ENCODE measurements at regions of chr17 and their contacts with region 1.

Region 1: GRCh38 chr17:1908699-1909309 is 79.0 kb downstream of the RPA1 start:
- DNase-seq: peak in 7 of 10 donors; percentile 50 to 78 (median 64)
- H3K4me3 ChIP-seq: peak overlapping the region in 57 of 59 donors; percentile 2 to 65 (median 45)
- H3K27ac ChIP-seq: peak overlapping the region in 51 of 59 donors; percentile 17 to 93 (median 75)
- H3K27me3 ChIP-seq: peaks cover 0 to 66% (median 3%) of the 10 kb centered on the region in 45 donors
- CTCF ChIP-seq: peak; percentile 14 to 83 (median 71)

Region 2: GRCh38 chr17:2029911-2030778 is 121.3 kb after region 1 on chr17 and contains the start of gene DPH1:
- intact Hi-C with region 1: loop called (anchors 2 kb)
- DNase-seq: peak; percentile 72 to 94 (median 90)
- H3K4me3 ChIP-seq: peak within 1 kb of the TSS; percentile 63 to 100 (median 95)
- H3K27ac ChIP-seq: peak within 1 kb of the TSS in 57 of 59 donors; percentile 20 to 93 (median 79)
- H3K27me3 ChIP-seq: peaks cover 0 to 21% (median 0%) of the 10 kb centered on the region in 45 donors
- CTCF ChIP-seq: peak in 23 of 56 donors; percentile 4 to 49 (median 24)
- total RNA-seq, gene DPH1: 57.6 to 158 (median 87.2) TPM

Region 3: DNA sequence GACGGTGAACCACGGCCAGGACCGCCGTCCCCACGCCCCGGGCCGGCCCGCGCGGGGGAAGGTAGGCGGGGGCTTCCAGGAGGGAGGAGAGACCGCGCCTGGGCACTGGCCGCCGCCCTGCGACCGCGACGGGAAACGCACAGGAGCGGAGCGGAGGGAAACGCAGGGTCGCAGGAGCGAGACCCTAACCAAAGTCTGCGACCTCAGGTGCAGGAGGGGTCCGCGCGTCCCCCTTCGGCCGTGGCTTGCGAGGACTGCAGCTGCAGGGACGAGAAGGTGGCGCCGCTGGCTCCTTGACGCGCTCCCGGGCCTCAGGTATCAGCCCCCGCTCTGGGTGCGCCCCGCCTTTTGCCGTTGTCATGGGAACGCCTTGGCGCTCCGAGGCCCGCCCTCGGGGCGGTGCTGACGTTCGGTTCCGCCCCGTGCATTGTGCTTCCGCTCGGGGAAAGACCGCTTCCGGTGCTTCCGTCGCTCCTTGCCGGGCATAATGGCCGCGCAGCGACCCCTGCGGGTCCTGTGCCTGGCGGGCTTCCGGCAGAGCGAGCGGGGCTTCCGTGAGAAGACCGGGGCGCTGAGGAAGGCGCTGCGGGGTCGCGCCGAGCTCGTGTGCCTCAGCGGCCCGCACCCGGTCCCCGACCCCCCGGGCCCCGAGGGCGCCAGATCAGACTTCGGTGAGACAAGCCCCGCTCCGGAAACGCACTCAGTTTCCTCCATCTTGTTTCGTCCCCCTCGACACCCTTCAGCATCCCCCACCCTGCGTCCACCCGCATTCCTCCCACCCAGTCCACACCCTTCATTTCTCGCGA is 133.0 kb after region 1 on chr17 and contains the start of gene OVCA2:
- intact Hi-C with region 1: loop called in 1 of 2 experiments (anchors 5 kb)
- DNase-seq: peak; percentile 88 to 97 (median 94)
- H3K4me3 ChIP-seq: peak within 1 kb of the TSS; percentile 56 to 92 (median 82)
- H3K27ac ChIP-seq: peak within 1 kb of the TSS; percentile 43 to 96 (median 89)
- H3K27me3 ChIP-seq: no peaks in the 10 kb centered on the region
- CTCF ChIP-seq: peak; percentile 43 to 88 (median 73)
- total RNA-seq, gene OVCA2: 6.6 to 29.4 (median 16.4) TPM

Region 4: DNA sequence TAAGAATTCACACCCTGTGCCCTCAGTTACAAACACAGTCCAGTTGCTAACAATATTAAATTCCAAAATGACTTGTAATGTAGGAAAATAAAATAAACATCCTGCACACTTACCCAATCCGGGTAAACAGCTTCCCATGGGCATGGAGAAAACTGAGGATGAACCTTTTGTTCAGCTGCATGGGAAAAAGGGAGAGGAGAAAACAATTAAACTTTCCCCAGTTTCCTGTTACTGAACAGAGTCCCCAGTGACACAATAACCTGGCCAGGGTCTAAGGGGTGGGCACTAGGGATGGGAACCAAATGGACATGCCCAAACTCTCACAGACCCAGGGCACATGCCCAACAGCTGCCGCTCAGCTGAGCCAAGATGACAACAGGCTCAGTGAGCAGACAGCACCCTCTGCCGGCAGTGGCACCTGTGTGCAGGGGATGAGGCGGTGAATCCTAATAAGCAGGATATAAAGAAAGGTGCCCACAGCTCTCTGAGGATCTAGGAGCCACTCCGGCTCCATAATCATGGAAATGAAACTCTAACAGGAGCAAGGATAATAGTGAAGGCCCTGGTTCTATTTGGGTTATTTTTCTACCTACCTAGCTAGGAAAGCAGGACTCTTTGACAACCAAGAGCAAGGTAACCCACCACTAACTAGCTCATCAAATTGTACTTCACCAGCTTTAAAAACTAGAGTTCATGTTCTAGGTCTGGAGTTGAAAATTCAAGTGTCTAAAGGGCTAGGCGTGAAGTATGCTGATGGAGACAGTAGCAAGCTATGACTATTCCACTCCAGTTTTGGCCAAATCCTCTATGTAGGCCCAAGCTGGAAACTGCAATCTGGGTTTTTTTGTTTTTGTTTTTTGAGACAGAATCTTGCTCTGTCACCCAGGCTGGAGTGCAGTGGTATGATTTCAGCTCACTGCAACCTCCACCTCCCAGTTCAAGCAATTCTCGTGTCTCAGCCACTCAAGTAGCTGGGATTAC is 336.0 kb after region 1 on chr17:
- intact Hi-C with region 1: loop called in 1 of 2 experiments (anchors 10 kb)
- DNase-seq: peak; percentile 72 to 88 (median 85)
- H3K4me3 ChIP-seq: peak overlapping the region in 1 of 59 donors; percentile 9
- H3K27ac ChIP-seq: peak overlapping the region in 29 of 59 donors; percentile 4 to 66 (median 38)
- H3K27me3 ChIP-seq: no peaks in the 10 kb centered on the region
- CTCF ChIP-seq: peak; percentile 84 to 99 (median 98)

Region 5: DNA sequence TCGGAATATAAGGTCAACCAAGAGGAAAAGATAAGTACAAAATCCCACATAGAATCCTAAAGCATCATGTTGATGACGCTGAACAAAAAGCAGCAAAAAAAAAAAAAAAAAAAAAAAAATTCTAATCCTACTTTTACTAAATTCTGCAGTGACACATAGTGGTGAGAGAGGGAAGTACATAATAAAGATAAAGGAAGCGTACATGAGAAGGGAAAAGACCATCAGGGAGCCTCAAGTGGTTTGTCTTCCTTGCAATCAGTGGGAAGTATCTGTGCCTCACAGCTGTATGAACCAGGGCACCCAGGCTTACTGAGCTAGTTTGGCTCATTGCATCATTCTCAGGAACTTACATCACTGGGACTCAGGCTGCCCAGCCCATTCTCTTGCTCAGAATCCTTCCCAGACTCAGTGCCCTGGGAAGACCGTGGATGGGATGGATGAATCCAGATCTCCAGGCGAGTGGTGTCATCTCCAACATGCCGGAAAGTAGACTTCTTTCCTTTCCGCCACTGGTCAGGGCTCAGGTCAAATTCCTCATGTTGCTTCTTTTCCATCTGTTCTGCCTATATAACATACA is 373.6 kb after region 1 on chr17:
- intact Hi-C with region 1: loop called in 1 of 2 experiments (anchors 10 kb)
- DNase-seq: no peak
- H3K4me3 ChIP-seq: no peak overlapping the region
- H3K27ac ChIP-seq: peak overlapping the region in 1 of 59 donors; percentile 1
- H3K27me3 ChIP-seq: no peaks in the 10 kb centered on the region
- CTCF ChIP-seq: peak; percentile 51 to 82 (median 71)